Activated naive CD4-positive, alpha-beta T cell treated with anti-CD3 and anti-CD28 coated beads for 36 hours (primary cell): ENCODE measurements at regions of chr6 and their contacts with region 1.

Region 1: DNA sequence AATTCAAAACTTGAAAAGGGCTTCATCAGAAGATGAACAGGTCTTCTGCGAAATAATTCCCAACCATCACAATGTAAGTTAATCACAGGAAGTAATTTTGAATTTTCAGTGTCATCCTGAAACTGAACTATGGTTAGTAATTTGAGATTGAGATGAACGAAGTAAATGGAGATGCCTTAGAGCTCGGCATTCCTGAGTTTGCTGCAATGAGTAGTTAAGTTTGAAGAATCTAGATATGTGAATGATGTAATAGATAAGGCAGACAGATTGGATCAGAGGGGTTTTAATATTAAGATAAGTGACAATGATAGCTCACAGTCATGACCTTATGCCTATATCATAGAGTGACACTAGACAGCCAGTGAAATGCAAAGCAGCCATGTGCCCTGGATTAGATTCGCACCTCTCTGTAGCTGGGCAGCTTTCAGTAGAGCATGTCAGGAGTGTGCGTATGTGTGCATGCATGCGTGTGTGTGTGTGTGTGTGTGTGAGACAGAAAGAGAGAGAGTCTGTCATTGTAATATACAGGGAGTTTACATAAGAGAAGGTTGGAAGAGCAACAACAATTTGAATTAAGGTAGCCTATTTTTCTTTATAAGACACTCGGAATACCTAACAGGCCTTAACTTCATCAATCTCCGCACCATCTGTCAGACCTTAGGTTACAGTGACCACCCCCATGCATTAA is 233.0 kb downstream of the GMPR start:
- DNase-seq: no peak
- H3K4me3 Mint-ChIP-seq: no peak overlapping the region
- H3K27ac Mint-ChIP-seq: peak overlapping the region; percentile 68
- H3K4me1 Mint-ChIP-seq: peaks cover 60% of the 10 kb centered on the region
- H3K27me3 Mint-ChIP-seq: no peaks in the 10 kb centered on the region

Region 2: DNA sequence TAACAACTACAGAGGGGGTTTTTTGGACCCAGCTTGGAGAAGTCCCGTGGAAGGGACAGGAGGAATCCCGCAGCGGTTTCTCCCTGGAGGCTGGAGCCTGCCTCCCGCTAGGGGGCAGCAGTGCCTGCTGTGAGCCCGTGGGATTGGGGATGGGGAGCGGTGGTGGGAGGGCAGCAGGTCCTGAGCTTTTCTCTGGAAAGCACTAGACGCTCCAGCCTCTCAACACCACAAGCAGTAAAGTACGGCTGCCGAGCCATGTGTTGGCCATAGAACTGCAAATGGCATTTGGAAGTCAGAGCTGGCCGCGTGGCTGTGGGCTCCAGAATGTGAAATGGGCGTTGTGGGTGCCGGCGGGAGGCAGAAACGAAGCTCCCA is 185.2 kb before region 1 on chr6:
- CTCF ChIA-PET with region 1: no interaction called
- intact Hi-C with region 1: no loop called
- DNase-seq: peak; percentile 28
- H3K4me3 Mint-ChIP-seq: no peak overlapping the region
- H3K27ac Mint-ChIP-seq: no peak overlapping the region
- H3K4me1 Mint-ChIP-seq: no peaks in the 10 kb centered on the region
- H3K27me3 Mint-ChIP-seq: no peaks in the 10 kb centered on the region

Region 3: DNA sequence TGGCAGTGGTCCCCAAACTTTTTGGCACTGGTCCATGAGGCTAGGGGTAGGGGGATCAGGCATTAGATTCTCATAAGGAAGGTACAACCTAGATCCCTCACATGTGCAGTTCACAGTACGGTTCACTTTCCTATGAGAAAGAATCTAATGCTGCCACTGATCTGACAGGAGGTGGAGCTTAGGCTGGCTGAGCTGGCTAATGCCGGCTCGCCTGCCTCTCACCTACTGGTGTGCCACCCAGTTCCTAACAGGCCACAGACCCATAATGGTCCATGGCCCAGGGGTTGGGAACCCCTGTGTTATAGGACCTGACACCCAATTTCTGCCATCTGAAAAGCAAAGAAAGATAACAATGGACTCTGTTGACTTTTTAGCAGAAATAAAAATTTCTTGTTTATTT is 33.4 kb before region 1 on chr6:
- CTCF ChIA-PET with region 1: no interaction called
- intact Hi-C with region 1: loop called (anchors 2 kb)
- DNase-seq: no peak
- H3K4me3 Mint-ChIP-seq: peak overlapping the region; percentile 78
- H3K27ac Mint-ChIP-seq: peak overlapping the region; percentile 89
- H3K4me1 Mint-ChIP-seq: peaks cover 65% of the 10 kb centered on the region
- H3K27me3 Mint-ChIP-seq: no peaks in the 10 kb centered on the region

Region 4: DNA sequence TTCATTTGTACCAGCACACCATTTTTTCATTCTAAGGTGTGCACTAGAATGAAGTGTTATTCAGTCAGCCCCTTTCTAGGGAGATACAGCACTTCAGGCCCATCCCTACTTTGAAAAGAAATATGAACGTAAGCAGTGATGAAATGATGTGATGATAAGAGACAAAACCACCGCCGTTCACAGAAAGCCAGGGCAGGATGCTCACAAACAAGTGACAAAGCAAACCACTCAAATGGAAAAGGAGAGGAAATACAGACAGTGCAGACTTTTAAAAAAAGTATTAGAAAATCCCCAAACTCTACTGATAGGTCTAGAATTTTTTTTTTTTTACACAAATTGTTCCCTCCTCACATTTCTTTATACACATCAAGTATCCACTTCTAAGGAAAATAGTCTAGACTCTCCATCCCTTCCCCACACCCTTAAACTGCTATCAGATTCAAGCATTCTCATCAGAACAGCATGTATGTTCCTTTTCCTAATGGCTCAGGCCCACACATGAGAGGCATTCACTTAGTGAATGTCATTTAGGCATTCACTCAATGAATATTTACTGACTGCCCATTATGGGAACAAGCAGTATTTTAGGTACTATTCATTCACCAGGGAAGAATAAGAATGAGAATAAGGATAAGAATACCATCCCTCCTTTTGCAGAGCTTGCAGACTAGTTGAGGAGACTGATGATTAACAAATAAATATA is 10.5 kb after region 1 on chr6:
- CTCF ChIA-PET with region 1: interaction called, 3 read pairs
- intact Hi-C with region 1: loop called (anchors 1 kb)
- DNase-seq: peak; percentile 79
- H3K4me3 Mint-ChIP-seq: peak overlapping the region; percentile 32
- H3K27ac Mint-ChIP-seq: peak overlapping the region; percentile 75
- H3K4me1 Mint-ChIP-seq: peaks cover 70% of the 10 kb centered on the region
- H3K27me3 Mint-ChIP-seq: no peaks in the 10 kb centered on the region

Region 5: DNA sequence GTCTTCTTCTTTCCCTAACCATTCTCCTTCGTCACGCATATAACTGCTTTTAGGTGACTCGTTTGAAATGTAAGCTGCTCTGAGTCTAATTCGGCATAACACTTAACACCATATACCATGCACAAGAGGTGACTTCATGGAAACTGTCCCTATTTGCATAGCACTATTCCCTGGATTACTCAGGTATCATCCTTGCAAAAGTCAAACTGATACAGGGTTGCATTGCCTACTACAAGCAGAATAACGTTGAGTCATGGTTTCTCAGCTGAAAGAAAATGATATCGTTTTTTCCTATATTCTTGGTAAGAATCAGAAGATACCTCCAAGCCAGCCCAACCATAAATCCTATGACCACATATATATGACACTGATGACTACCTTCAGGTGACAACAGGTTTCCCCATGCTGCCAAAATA is 62.4 kb after region 1 on chr6:
- CTCF ChIA-PET with region 1: no interaction called
- intact Hi-C with region 1: loop called (anchors 1 kb)
- DNase-seq: peak; percentile 22
- H3K4me3 Mint-ChIP-seq: no peak overlapping the region
- H3K27ac Mint-ChIP-seq: no peak overlapping the region
- H3K4me1 Mint-ChIP-seq: peaks cover 21% of the 10 kb centered on the region
- H3K27me3 Mint-ChIP-seq: no peaks in the 10 kb centered on the region

Region 6: GRCh38 chr6:16657768-16658167 is 186.4 kb after region 1 on chr6:
- CTCF ChIA-PET with region 1: no interaction called
- intact Hi-C with region 1: loop called (anchors 2 kb)
- DNase-seq: peak; percentile 9
- H3K4me3 Mint-ChIP-seq: peak overlapping the region; percentile 2
- H3K27ac Mint-ChIP-seq: peak overlapping the region; percentile 32
- H3K4me1 Mint-ChIP-seq: peaks cover 43% of the 10 kb centered on the region
- H3K27me3 Mint-ChIP-seq: no peaks in the 10 kb centered on the region